ENCODE measurements at regions of chr3 and their contacts with region 1.

Region 1: DNA sequence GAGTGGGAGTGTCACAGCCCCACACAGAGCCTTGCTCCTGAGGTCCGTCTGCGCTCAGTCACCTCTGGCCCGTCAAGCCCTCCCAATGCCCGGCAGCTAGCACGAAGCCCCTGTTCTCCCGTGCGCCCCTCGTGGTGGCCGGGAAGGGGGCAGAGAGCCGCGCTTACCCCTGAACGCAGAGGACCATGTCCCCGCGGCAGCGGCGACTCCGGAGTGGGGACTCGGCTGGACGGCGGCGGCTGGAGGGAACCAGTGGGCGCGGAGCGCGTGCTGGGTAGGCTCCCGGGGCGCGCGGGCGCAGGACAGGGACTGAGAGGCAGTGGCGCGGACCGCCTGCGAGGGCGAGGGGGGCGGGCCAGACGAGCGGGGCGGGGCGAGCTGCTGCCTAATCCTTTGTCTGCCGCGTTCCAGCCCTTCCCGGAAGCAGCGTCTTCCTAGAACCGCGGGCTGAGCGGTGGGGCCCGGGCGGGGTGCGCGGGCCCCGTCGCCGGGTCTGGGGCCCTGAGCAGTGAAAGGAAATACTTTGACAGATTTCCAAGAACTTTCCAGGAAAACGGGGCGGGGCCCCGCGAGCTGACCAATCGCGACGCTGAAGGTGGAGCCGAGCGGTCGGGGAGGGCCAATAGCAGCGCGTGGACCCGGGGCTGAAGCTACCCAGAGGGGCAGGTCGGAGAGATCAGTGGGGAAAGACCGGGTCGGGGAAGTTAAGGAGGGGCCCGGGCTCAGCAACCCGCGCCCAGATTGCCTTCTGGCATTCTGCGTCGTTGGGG is at the start of gene CISH:
- DNase-seq: peak; percentile 97 to 98 (median 97)
- ATAC-seq: peak; percentile 81
- H3K4me3 ChIP-seq: peak within 1 kb of the TSS; percentile 68
- H3K4me1 ChIP-seq: peaks cover 39% of the 10 kb centered on the region
- CTCF ChIP-seq: no peak
- total RNA-seq, gene CISH: 12.7 to 21.4 (median 19.2) TPM

Region 2: DNA sequence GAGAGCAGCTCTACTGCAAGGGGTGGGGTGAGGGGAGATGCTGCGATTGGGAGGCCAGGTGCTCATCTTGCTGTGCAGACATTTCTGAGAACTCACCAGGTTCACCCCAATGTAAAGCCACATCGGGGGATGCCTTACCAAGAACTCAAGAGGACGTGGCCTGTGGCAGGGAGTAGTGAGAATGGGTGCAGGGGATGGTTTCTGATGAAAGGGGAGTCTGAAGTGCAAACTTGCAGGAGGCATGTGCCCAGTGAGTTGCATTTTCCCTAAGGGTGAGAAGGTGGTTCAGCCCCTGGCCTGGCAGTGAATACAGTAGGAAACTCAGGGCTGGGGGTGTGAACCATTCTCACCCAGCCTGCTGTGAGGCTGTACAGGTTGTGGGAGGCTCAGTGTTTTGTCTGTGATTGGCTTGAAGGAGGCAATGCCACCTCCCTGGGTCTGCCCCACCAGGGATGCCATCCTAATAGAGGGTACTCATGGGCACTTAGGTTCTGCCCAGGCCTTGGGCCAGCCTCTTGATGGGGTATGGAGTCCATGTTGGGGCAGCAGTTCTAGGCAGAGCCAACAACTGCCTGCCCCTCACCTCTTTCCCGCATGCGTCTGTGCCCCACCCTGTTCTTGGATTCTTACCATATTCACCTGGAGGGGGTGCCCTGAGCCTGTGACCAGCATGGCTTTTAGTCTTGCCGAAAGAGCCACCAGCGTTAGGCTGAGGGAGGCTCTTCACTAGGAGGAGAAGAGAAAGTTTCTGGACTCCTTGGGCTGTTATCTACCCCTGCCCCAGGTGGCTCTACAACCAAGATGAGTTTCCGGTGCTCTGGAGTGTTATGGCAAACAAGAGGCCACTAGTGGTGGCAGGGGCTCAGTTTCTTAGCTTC is 37.8 kb before region 1 on chr3:
- intact Hi-C with region 1: loop called (anchors 1 to 2 kb)
- DNase-seq: peak in 1 of 3 donors; percentile 36
- ATAC-seq: no peak
- H3K4me3 ChIP-seq: no peak overlapping the region
- H3K4me1 ChIP-seq: peaks cover 18% of the 10 kb centered on the region
- CTCF ChIP-seq: no peak

Region 3: GRCh38 chr3:51384726-51385473 is 773.3 kb after region 1 on chr3 and contains the start of gene MANF:
- intact Hi-C with region 1: loop called (anchors 5 kb)
- DNase-seq: peak; percentile 97 to 99 (median 98)
- ATAC-seq: peak; percentile 94
- H3K4me3 ChIP-seq: peak within 1 kb of the TSS; percentile 47
- H3K4me1 ChIP-seq: peaks cover 34% of the 10 kb centered on the region
- CTCF ChIP-seq: peak; percentile 12
- total RNA-seq, gene MANF: 35.4 to 91.1 (median 47.2) TPM